Activated CD8-positive, alpha-beta memory T cell treated with anti-CD3 and anti-CD28 coated beads, Interleukin-2, amount 10 ng/mL, durations not matched to agents 7 days and 5 days (primary cell): ENCODE measurements at regions of chr10 and their contacts with region 1.

Region 1: DNA sequence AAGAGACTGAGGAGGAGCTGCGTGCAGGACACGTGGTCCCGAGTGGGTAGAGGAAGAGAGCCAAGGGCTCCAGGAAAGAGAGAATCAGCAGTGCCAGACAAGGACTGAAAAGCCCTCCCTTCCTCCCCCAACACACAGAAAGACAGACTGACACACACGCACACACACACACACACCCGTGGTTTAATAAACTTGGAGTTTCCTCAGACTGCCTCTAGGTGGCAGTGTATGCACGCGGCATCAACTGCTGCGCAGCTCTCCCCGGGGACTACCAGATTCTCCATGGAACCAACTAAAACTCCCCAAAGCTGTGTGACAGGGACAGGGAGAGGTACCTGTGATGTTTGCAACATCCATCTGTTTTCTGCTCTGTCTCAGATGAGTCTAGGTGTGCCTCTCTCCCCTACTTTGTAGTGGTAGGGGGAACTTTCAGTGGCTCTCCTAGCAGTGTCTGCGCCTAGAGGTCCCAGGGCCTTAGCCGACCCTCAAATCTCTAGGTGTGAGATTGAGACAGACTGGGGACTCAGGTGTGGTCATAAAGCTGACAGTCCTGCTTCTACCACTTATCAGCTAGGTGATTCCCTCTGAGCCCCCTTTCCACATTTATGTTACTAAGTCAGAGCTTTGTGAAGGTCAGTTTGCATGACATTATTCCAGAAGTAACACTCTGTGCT is 9.3 kb upstream of the TSPAN14 start:
- DNase-seq: peak; percentile 74
- ATAC-seq: peak; percentile 90
- H3K4me3 Mint-ChIP-seq: no peak overlapping the region
- H3K27ac Mint-ChIP-seq: peak overlapping the region; percentile 72
- H3K4me1 Mint-ChIP-seq: peaks cover 20% of the 10 kb centered on the region
- H3K27me3 Mint-ChIP-seq: peaks cover 12% of the 10 kb centered on the region

Region 2: GRCh38 chr10:80333983-80334382 is 110.8 kb before region 1 on chr10:
- CTCF ChIA-PET with region 1: no interaction called
- DNase-seq: no peak
- ATAC-seq: no peak
- H3K4me3 Mint-ChIP-seq: no peak overlapping the region
- H3K27ac Mint-ChIP-seq: no peak overlapping the region
- H3K4me1 Mint-ChIP-seq: no peaks in the 10 kb centered on the region
- H3K27me3 Mint-ChIP-seq: peaks cover 14% of the 10 kb centered on the region

Region 3: DNA sequence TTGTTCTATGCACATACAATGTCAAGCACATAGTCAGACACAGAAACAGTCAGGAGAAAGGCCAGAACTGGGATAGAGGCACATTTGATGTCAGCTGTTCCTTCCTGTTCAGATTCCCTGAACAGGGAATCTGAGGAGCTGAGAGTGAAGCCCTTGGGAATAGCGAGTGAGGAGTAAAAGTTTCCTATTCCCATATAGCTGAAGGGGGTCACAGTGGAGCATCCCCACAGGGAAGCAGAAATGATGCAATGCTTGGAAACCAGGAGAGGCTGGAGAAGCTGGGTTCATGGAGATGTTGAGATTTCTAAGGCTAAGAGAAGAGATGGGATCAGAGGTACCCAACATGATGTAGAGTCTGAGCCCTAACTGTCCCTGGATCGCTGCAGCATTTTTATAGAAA is 47.8 kb before region 1 on chr10:
- CTCF ChIA-PET with region 1: no interaction called
- DNase-seq: no peak
- ATAC-seq: no peak
- H3K4me3 Mint-ChIP-seq: no peak overlapping the region
- H3K27ac Mint-ChIP-seq: no peak overlapping the region
- H3K4me1 Mint-ChIP-seq: no peaks in the 10 kb centered on the region
- H3K27me3 Mint-ChIP-seq: peaks cover 8% of the 10 kb centered on the region

Region 4: DNA sequence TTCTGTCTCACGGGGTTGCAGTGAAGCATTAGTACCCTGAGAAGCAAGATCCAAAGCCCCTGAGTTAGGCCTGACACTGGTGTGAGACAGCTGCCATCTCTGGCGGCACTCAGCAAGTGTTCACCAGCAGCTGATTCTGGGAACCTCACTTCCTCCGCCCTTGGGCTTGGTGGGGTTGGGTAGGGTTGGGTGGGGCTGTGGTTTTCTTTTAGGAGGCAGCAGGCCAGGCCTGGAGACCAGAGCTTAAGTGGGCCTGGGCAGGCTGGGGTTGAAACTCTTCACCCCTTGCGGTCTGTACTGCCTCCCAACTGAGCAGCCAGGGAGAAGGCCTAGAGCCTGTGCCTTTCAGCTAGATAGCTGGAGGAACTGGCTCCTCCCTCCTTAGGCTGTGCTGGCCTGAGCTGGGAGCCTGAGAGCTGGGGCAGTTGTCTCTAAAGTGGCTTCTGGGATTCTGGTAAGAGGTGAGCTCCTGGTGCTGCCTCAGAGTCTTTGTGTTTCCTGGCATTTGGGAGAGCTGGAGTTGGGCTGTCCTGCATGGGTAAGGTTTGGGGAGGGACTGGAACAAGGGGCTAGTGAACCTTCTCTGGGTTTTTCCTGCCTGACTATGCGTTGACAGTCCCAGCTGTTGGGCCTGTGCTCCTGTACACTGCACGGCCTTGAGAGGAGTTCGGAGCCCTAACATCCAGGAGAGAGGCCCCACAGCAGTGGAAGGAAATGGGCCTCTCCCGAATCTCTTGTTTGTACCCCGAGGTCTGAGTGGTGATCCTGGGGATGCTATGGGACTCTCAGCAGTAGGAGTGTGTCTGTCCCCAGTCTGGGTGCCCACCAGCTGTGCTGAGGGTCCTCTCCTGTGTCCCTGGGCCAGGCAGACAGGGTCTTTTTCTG is 14.5 kb after region 1 on chr10:
- CTCF ChIA-PET with region 1: interaction called, 71 read pairs
- DNase-seq: peak; percentile 93
- ATAC-seq: peak; percentile 57
- H3K4me3 Mint-ChIP-seq: peak overlapping the region; percentile 92
- H3K27ac Mint-ChIP-seq: peak overlapping the region; percentile 94
- H3K4me1 Mint-ChIP-seq: peaks cover 85% of the 10 kb centered on the region
- H3K27me3 Mint-ChIP-seq: no peaks in the 10 kb centered on the region

Region 5: DNA sequence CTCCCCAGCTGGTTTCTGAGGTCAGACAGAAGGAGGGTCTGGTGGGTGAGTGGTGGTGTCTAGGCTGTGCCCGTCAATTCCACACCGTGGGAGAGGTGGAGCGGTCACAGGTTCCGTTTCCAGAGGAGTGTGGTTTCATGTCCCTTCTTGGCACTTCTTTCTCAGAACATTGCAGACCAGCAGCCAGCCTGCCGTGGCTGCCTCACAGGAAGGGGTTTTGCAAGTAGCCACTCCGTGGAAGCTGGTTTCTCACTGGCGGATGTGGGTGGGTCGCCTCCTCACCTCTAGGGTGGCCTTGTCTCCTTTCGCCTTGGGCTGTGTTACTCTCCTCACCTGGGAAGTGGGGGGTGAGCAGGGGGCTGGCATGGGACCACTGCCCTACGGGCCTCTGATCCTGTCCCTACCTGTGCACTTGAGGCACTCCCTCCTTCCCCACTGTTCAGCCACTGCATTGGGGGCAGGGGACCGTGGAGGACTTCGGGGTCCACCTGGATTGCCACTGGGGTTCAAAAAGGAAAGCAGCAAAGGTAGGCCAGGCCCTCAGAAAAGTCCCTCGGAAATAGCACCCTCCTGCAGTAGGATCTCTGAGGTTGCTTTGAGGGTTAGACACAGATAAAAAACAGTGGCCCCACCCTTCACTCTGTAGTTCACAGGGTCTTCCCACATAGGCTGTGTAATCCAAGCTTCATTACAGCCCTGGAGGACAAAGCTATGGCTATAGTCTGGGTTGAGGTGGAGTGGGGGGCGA is 43.2 kb after region 1 on chr10:
- CTCF ChIA-PET with region 1: interaction called, 21 read pairs
- DNase-seq: peak; percentile 92
- ATAC-seq: peak; percentile 71
- H3K4me3 Mint-ChIP-seq: peak overlapping the region; percentile 66
- H3K27ac Mint-ChIP-seq: peak overlapping the region; percentile 90
- H3K4me1 Mint-ChIP-seq: peaks cover 97% of the 10 kb centered on the region
- H3K27me3 Mint-ChIP-seq: no peaks in the 10 kb centered on the region

Region 6: GRCh38 chr10:80530251-80530650 is 85.5 kb after region 1 on chr10:
- CTCF ChIA-PET with region 1: interaction called, 28 read pairs
- DNase-seq: peak; percentile 75
- ATAC-seq: peak; percentile 72
- H3K4me3 Mint-ChIP-seq: peak overlapping the region; percentile 44
- H3K27ac Mint-ChIP-seq: peak overlapping the region; percentile 93
- H3K4me1 Mint-ChIP-seq: peaks cover 72% of the 10 kb centered on the region
- H3K27me3 Mint-ChIP-seq: no peaks in the 10 kb centered on the region

Region 7: DNA sequence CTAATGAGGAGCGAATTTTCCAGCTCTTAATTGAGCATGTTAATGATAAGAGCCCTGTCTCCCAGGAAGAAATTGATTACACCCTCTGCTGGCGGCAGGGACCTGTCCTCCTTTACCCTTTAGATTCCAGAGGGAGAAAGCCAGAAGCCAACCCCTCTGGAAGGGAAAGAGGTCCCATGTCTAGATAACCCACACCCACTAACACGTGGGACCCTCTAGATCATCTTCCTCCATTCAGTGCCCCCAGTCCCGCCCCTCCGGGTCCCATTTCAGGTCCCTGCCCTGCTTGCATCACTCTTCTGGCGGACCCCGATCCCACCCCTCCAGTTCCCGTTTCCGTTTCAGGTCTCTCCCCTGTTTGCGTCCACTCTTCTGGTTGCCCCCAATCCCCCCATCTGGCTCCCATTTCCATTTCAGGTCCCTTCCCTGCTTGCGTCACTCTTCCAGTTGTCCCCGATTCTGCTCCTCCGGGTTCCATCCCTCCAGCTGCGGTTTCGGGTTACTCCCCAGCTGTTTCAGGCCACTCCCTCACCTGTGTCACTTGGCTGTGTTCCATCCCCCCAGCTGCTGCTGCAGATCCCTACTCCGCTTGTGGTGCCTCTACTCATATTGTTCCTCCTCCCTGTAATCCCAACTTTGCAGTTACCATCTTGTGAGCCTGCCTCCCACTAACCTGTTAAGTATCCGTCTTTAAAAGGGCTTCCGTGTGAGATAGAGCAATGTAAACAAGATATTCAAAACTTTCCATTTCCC is 295.4 kb after region 1 on chr10:
- CTCF ChIA-PET with region 1: no interaction called
- DNase-seq: no peak
- ATAC-seq: no peak
- H3K4me3 Mint-ChIP-seq: no peak overlapping the region
- H3K27ac Mint-ChIP-seq: no peak overlapping the region
- H3K4me1 Mint-ChIP-seq: no peaks in the 10 kb centered on the region
- H3K27me3 Mint-ChIP-seq: peaks cover 2% of the 10 kb centered on the region